ENCODE measurements at regions of chr16 and their contacts with region 1.

Region 1: GRCh38 chr16:57413301-57413730 is 8.7 kb downstream of the CCL17 start:
- DNase-seq: no peak
- ATAC-seq: no peak
- H3K4me3 Mint-ChIP-seq: no peak overlapping the region
- H3K27ac Mint-ChIP-seq: no peak overlapping the region
- H3K4me1 Mint-ChIP-seq: peaks cover 12% of the 10 kb centered on the region
- H3K27me3 Mint-ChIP-seq: no peaks in the 10 kb centered on the region
- CTCF ChIP-seq: no peak

Region 2: DNA sequence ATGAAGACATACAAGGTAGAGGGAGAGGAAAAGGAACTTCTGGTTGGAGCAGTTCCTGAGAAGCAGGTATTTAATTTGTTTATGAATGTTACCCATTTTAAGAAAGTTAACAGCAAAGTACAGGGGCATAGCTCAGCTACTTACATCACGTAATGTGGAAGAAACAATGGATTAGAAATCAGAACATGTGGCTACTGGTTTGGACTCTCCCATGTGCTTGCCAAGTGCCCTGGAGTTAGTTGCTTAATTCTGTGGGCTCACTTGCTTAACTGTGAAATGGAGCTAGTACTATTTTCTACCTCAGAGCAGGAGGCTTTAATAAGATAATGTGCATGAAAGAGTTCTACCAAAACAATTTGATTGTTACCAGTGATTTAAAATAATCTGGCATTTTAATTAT is 199.9 kb before region 1 on chr16:
- CTCF ChIA-PET with region 1: no interaction called
- POLR2A ChIA-PET with region 1: no interaction called
- intact Hi-C with region 1: no loop called
- DNase-seq: no peak
- ATAC-seq: no peak
- H3K4me3 Mint-ChIP-seq: no peak overlapping the region
- H3K27ac Mint-ChIP-seq: no peak overlapping the region
- H3K4me1 Mint-ChIP-seq: peaks cover 2% of the 10 kb centered on the region
- H3K27me3 Mint-ChIP-seq: no peaks in the 10 kb centered on the region
- CTCF ChIP-seq: no peak

Region 3: GRCh38 chr16:57300387-57301125 is 112.8 kb before region 1 on chr16:
- CTCF ChIA-PET with region 1: interaction called, 258 read pairs
- POLR2A ChIA-PET with region 1: interaction called, 31 read pairs
- intact Hi-C with region 1: loop called (anchors 1 kb)
- DNase-seq: peak; percentile 99
- ATAC-seq: peak; percentile 91
- H3K4me3 Mint-ChIP-seq: no peak overlapping the region
- H3K27ac Mint-ChIP-seq: no peak overlapping the region
- H3K4me1 Mint-ChIP-seq: peaks cover 14% of the 10 kb centered on the region
- H3K27me3 Mint-ChIP-seq: no peaks in the 10 kb centered on the region
- CTCF ChIP-seq: peak; percentile 96

Region 4: DNA sequence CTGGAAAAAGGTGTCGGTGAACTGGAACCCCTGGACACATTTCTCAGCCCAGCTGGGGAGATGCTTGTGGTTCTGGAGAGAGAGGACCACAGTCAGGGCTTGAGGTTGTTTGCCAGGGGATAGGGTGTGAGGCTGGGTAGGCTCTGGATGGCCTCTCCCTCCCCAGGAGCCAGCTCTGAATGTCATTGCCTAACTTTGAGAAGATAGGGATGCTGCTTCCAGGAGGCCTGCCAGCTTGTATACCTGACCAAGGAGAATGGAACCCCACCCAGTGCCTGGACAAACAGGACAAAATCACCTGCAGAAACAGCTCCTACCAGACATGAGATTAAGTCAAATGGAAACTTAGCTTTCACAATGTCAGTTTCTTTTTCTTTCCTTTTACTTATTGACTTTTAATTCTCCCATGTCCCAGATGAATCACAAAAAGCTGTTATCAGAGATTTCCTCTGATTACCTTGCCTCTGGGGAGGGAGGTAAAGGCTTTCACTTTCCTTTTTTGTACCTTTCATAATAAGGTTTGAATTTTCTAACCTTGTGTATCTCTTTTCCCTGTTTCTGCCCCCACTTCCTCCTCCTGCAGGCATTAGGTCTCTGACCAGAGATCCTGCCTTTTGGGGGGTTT is 99.0 kb before region 1 on chr16:
- CTCF ChIA-PET with region 1: interaction called, 16 read pairs
- POLR2A ChIA-PET with region 1: interaction called, 8 read pairs
- intact Hi-C with region 1: no loop called
- DNase-seq: no peak
- ATAC-seq: peak; percentile 81
- H3K4me3 Mint-ChIP-seq: no peak overlapping the region
- H3K27ac Mint-ChIP-seq: peak overlapping the region; percentile 43
- H3K4me1 Mint-ChIP-seq: peaks cover 25% of the 10 kb centered on the region
- H3K27me3 Mint-ChIP-seq: no peaks in the 10 kb centered on the region
- CTCF ChIP-seq: no peak

Region 5: DNA sequence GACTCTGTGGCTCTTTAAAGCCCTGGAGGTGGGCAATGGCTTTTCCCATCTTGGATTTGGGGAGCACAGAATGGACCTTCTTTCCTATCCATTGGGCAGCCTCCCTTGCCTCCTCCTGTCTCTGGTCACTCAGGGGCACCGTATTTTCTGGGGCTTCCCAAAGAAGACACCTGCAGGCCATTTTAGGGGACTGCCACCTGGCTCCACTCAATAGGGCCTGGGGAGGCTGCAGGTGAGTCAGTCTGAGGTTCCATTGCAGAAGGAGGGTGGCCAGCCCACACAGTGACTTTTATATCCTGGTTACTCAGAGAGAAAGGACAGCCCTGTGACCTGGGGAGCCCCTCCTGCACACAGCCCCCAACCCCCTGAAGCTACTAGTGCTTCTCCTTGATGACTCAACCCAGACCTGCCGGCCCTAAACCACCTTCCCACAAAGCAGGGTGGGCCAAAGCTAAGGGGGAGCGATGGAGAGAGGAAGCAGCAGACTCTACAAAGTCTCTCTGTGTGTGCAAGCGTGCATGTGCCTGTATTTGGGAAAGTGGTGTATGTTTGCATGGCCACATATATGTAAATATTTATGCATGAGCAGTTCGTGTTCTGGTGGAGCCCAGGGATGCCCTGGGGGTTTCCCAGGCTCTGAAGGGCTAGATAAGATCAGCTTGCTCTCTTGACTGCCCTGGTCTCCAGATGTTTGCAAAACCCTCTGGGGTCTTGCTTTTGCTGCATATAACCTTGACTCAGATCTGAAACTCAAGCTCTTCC is 36.1 kb before region 1 on chr16:
- CTCF ChIA-PET with region 1: interaction called, 23 read pairs
- POLR2A ChIA-PET with region 1: interaction called, 4 read pairs
- intact Hi-C with region 1: no loop called
- DNase-seq: peak; percentile 91
- ATAC-seq: peak; percentile 92
- H3K4me3 Mint-ChIP-seq: no peak overlapping the region
- H3K27ac Mint-ChIP-seq: peak overlapping the region; percentile 18
- H3K4me1 Mint-ChIP-seq: peaks cover 43% of the 10 kb centered on the region
- H3K27me3 Mint-ChIP-seq: no peaks in the 10 kb centered on the region
- CTCF ChIP-seq: peak; percentile 62

Region 6: GRCh38 chr16:57432989-57433388 is 19.7 kb after region 1 on chr16:
- CTCF ChIA-PET with region 1: interaction called, 81 read pairs
- POLR2A ChIA-PET with region 1: no interaction called
- intact Hi-C with region 1: no loop called
- DNase-seq: no peak
- ATAC-seq: no peak
- H3K4me3 Mint-ChIP-seq: no peak overlapping the region
- H3K27ac Mint-ChIP-seq: peak overlapping the region; percentile 66
- H3K4me1 Mint-ChIP-seq: peaks cover 29% of the 10 kb centered on the region
- H3K27me3 Mint-ChIP-seq: no peaks in the 10 kb centered on the region
- CTCF ChIP-seq: no peak

Region 7: DNA sequence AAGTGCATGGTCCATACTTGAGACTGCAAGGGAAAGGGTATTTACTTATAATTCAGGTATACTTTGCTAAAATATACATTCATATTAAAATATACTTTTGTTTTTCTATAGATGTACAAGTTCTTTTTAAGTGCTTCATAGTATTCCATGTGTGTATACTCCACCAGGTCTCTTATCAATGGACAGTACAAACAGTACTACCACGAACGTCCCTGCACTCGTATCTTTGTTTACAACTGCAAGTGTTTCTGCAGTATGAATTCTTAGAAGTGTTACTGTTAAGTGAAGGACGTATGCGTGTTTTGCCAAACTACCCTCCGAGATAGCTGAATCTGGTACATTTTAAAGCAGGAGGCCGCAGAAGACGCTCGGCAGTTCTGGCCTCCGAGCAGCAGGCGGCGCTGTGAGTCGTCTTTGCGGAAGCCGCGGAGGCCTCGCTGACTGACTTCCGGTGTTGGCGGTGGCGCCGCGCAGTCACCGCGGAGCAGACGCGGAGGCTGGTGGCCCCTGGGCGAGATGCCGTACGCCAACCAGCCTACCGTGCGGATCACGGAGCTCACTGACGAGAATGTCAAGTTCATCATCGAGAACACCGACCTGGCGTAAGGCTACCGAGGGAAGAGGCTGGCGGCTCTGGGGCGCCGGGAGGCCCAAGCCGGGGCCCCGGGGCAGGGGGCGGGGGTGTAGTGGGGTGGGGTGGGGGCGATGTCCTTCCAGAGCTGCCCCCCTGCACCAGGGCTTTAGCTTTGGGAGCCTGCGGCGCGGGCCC is 49.1 kb after region 1 on chr16 and contains the start of gene POLR2C:
- CTCF ChIA-PET with region 1: interaction called, 35 read pairs
- POLR2A ChIA-PET with region 1: interaction called, 8 read pairs
- intact Hi-C with region 1: no loop called
- DNase-seq: peak; percentile 95
- ATAC-seq: peak; percentile 98
- H3K4me3 Mint-ChIP-seq: peak within 1 kb of the TSS; percentile 99
- H3K27ac Mint-ChIP-seq: peak within 1 kb of the TSS; percentile 100
- H3K4me1 Mint-ChIP-seq: peaks cover 25% of the 10 kb centered on the region
- H3K27me3 Mint-ChIP-seq: no peaks in the 10 kb centered on the region
- CTCF ChIP-seq: peak; percentile 99
- total RNA-seq, gene POLR2C: 62.4 to 63.0 TPM